Motor neuron (in vitro differentiated cells): ENCODE measurements at regions of chr9 and their contacts with region 1.

Region 1: DNA sequence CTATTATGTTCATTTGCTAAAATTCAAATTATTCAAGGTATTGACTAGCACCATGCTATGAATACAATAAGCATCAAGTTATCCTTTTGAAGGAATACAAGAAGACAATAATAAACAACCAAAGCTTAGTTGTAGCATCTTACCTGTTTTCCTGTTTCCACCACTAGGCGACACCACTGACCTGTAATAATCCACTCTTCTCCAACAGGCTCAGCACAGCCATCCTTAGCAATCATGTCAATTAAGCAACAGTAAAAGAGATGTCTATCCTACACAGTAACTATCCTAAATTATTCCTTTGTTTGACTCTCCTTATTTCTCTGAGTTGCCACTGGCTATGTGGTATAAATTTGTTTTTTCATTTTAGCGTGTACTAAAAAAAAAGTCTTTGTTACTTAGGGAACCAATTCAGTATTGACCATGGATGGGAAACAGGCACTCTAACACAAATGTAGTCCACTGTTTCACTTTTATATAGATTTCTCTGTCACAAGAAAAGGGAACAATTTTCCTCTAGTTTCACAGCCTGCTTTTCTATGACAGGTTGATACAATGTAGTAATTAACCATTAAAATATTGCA is 46.2 kb downstream of the PCA3 start:
- ATAC-seq: peak; percentile 61 to 88 (median 80)
- H3K4me3 ChIP-seq: no peak overlapping the region
- H3K27ac ChIP-seq: no peak overlapping the region
- H3K4me1 ChIP-seq: no peaks in the 10 kb centered on the region

Region 2: GRCh38 chr9:76987594-76988200 is 177.2 kb after region 1 on chr9:
- in situ Hi-C with region 1: loop called in 4 of 9 experiments (anchors 10 to 25 kb)
- ATAC-seq: peak in 5 of 8 experiments; percentile 50 to 71 (median 65)
- H3K4me3 ChIP-seq: no peak overlapping the region
- H3K27ac ChIP-seq: no peak overlapping the region
- H3K4me1 ChIP-seq: no peaks in the 10 kb centered on the region

Region 3: DNA sequence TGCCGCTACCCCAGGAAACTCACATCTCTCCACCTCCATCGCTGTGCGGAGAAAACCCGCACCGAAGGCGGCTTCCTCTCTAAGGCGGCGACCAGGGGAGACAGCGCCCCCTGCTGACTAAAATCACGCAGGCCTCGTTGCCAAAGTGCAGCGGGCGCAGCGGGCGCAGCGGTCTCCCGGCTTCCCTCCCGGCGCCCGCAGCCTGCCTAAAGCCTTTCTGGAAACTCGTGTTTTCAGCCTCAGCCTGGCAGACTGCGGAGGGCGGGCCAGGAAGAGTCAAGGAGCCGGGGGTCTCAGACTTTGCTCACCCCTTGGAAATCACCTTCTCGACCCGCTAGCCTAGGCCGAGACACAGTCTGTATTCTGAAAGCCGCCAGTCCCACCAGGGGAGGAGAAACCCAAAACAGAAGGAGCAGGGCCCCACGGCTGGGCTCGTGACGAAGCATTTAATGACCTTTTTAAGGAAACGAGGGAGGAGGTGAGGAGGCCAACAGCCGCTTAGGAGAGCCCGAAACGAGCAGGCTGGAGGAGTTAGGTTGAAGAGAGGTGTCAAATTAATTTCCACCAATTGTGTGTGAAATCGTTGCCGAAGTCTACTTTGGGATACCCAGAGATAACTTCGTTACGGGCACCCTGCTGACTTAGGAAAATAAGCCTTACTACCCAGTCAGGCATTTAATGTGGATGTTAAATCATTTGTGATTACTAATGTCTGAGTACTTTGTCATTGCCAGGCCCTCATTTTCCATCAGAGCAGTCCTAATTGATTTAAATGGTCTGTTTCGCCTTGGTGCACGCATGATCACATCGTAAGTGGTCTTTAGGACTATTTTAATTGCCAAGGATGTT is 201.7 kb after region 1 on chr9:
- in situ Hi-C with region 1: loop called in 5 of 9 experiments (anchors 25 kb)
- ATAC-seq: peak; percentile 61 to 94 (median 90)
- H3K4me3 ChIP-seq: peak overlapping the region in 4 of 5 donors; percentile 3 to 19 (median 12)
- H3K27ac ChIP-seq: no peak overlapping the region
- H3K4me1 ChIP-seq: peaks cover 0 to 8% of the 10 kb centered on the region in 2 donors

Region 4: DNA sequence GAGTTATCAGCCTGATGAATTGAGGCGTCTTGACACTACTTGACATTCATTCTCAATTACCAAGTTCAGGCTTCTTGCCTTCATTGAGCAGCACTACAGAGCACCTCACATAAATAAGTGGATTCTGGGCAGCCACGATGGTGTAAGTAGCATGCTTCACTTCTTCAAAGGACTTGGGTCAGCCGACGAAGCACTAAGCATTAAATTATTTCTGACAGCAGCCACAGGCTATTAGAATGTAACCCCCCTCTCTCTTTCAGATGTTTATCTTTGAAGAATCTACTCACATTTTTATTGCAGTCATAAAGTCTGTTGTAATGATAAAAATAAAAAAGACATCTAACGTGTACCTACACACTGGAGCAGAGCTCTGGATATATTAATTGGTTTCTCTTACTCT is 320.9 kb after region 1 on chr9:
- in situ Hi-C with region 1: loop called in 2 of 9 experiments (anchors 25 kb)
- ATAC-seq: peak in 5 of 8 experiments; percentile 39 to 75 (median 45)
- H3K4me3 ChIP-seq: no peak overlapping the region
- H3K27ac ChIP-seq: no peak overlapping the region
- H3K4me1 ChIP-seq: peaks cover 0 to 7% of the 10 kb centered on the region in 2 donors